Activated CD8-positive, alpha-beta T cell treated with anti-CD3 and anti-CD28 coated beads for 36 hours (primary cell): ENCODE measurements at regions of chr10 and their contacts with region 1.

Region 1: DNA sequence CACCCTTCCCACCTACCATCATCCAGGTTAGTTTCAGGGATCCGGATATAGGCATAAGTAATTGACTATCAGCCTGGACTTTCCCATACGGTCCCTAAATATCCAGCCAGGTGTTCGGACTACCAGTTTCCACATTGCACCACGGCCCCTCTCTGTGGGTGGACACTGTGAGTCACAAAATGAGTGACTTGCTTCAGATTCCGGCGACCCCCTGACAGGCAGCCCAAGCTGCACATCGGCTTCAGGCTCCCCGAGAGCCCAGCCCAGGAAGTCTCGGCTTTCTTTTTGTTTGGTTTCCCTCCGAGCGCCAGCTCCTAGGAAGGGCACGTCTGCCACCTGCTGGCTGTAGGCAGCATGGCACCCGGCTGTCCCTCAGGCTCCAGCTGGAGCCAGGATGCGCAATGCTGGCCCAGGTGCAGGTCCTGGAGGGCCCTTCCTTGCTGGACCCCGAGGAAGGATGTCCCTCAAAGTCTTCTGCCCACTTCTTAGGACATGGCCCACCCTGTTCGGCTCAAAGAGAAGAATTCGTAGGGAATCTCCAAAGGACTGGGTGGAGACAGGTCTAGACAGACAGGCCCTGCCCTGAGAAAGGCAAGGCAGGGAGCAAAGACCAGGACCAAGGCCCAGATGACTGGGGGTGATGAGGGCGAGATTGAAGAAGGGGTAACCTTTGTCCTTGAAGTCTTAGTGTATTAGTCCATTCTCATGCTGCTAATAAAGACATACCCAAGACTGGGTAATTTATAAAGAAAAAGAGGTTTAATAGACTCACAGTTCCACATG is 10.6 kb downstream of the HABP2 start:
- DNase-seq: peak; percentile 82
- ATAC-seq: peak; percentile 99
- H3K4me3 Mint-ChIP-seq: peak overlapping the region; percentile 58
- H3K27ac Mint-ChIP-seq: no peak overlapping the region
- H3K4me1 Mint-ChIP-seq: no peaks in the 10 kb centered on the region
- H3K27me3 Mint-ChIP-seq: peaks cover under 1% of the 10 kb centered on the region
- CTCF ChIP-seq: peak; percentile 97

Region 2: GRCh38 chr10:113169853-113170460 is 393.5 kb before region 1 on chr10:
- CTCF ChIA-PET with region 1: no interaction called
- POLR2A ChIA-PET with region 1: no interaction called
- intact Hi-C with region 1: no loop called
- DNase-seq: peak; percentile 53
- ATAC-seq: peak; percentile 71
- H3K4me3 Mint-ChIP-seq: no peak overlapping the region
- H3K27ac Mint-ChIP-seq: no peak overlapping the region
- H3K4me1 Mint-ChIP-seq: peaks cover 8% of the 10 kb centered on the region
- H3K27me3 Mint-ChIP-seq: no peaks in the 10 kb centered on the region
- CTCF ChIP-seq: no peak

Region 3: DNA sequence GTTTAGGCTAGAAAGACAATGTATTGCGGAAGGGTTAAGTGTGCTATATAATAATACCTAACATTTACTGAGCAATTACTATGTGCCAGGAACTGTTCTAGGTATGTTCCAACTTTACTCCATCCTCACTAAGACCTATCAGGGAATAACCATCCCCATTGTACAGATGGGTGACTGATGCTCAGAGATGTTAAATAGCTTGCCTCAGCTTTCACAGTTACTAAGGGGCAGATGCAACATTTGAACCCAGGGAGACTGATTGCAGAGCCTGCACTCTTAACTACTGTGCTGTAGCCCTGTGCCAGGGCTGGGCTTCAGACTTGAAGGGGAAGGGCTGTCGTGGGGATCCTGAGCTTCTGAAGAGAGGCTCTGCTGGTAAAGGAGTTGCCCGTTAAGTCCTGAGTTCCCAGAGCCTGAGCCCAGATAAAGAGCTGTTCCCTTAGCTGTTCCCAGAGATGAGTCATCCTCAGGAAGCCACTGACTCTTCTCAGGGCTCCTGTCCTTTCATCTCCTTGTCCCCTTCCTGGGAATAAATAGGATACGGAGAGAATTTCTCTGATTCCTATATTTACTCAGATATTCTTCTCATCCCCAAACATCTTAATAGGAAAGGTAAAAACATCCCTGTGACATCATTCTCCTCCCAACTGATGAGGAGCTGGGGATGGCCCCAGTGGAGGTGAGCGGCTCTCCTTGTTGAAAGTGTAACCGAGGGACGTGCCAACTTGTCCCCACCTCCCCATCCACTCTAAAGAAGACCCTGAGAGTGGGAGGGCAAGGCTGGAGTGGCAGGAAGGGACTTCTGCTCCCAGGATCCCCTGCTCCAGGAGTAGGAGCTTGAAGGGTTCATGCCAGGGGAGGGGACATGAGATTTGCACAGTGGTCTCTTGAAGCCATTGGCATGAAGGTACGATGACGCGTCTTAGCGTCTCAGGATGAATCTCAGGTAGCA is 38.7 kb before region 1 on chr10:
- CTCF ChIA-PET with region 1: interaction called, 7 read pairs
- POLR2A ChIA-PET with region 1: no interaction called
- intact Hi-C with region 1: loop called (anchors 5 kb)
- DNase-seq: no peak
- ATAC-seq: no peak
- H3K4me3 Mint-ChIP-seq: no peak overlapping the region
- H3K27ac Mint-ChIP-seq: no peak overlapping the region
- H3K4me1 Mint-ChIP-seq: no peaks in the 10 kb centered on the region
- H3K27me3 Mint-ChIP-seq: peaks cover 5% of the 10 kb centered on the region
- CTCF ChIP-seq: no peak